ENCODE measurements at regions of chr9 and their contacts with region 1.

Region 1: DNA sequence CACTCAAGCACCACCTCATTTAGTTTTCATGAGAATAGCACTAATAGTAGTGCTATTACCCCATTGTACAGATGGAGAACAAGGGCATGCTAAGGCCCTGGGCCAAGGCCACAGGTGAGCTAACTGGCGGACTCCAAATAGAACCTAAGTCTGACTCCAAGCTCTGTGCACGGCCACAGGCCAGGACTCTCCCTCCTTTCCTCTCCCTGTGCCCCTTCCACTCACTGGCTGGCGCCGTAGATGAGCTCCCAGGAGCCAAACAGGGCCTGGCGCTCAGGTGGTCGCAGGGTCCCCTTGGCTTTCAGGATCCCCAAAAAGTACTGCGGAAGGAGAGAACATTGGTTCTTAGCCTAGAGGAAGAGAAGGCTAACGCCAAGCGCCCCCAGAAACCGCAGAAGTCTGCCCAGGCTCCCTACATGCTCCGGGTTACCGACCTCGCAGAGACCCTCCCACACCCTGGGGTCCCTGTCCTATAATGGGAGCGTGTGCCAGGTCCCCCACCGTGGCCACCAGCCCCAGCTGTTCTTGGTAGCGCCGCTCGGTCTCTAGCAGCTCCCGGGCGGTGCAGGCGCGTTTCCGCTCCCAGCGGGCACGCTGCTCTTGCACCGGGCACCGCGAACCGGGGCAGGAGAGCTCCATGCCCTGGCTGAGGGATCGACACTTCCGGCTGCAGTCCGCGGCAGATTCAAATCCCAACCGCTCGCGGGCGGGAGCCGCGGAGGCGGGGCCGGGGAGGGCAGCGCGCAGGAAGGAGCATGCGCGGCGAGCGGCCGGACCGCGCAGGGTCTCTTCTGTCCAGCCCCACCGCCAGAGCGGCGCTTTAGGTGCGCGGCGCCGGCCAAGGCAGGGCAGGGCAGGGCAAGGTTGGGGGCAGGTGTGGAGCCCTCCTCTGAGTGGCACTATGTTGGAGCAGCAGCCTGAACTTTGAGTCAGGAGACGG is at the start of gene ARHGEF39:
- DNase-seq: peak; percentile 71 to 97 (median 86)
- ATAC-seq: peak; percentile 97
- H3K4me3 ChIP-seq: peak within 1 kb of the TSS; percentile 53
- H3K27ac ChIP-seq: peak within 1 kb of the TSS in 1 of 2 donors; percentile 59
- H3K4me1 ChIP-seq: peaks cover 0 to 49% of the 10 kb centered on the region in 2 donors
- H3K27me3 ChIP-seq: no peaks in the 10 kb centered on the region
- CTCF ChIP-seq: no peak
- polyA plus RNA-seq, gene ARHGEF39: 7.6 to 17.7 (median 11.2) TPM

Region 2: GRCh38 chr9:35481347-35481975 is 183.3 kb before region 1 on chr9:
- intact Hi-C with region 1: no loop called
- DNase-seq: no peak
- ATAC-seq: peak; percentile 78
- H3K4me3 ChIP-seq: no peak overlapping the region
- H3K27ac ChIP-seq: no peak overlapping the region
- H3K4me1 ChIP-seq: peaks cover 0 to 7% of the 10 kb centered on the region in 2 donors
- H3K27me3 ChIP-seq: no peaks in the 10 kb centered on the region
- CTCF ChIP-seq: peak; percentile 55 to 66

Region 3: DNA sequence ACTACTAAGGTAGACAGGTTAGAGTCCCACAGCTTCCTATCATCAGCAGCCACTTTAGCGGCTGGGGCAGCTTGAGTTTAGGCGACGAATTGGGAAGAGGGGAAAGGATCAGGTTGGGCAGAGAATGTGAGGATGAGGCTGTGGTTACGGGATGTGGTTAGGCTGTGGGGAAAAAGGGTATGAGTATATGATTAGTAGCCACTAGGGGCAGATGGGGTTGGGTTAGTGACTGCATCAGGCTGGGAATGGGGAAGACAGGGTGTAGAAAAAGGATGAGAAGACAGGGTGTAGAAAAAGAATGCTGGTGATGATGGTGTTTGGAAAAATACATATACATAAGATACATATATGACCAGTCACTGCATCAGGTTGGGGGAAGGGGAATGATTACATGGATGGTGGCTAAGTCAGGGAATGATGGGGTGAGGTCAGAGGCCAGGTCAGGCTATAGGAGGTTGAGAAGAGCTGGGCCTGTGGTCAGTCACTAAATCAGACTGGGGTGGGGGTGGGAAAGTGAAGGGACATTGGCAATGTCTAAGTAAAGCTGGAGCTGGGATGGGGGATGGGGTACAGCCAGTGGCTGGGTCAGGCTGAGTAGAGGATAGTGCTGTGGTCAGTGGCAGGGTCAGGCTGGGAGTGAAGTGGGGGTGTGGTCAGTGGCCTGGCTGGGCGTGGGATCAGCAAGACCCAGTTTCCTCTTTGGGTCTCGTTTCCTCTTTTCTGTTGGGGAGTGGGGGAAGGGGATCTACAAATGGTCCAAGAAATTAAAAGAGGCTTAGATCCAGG is 65.1 kb after region 1 on chr9:
- intact Hi-C with region 1: loop called in 1 of 2 experiments (anchors 10 kb)
- DNase-seq: peak in 3 of 4 donors; percentile 52 to 93 (median 87)
- ATAC-seq: no peak
- H3K4me3 ChIP-seq: peak overlapping the region; percentile 18 to 83
- H3K27ac ChIP-seq: peak overlapping the region; percentile 96 to 97
- H3K4me1 ChIP-seq: peaks cover 59 to 71% of the 10 kb centered on the region in 2 donors
- H3K27me3 ChIP-seq: no peaks in the 10 kb centered on the region
- CTCF ChIP-seq: peak; percentile 36 to 58

Region 4: GRCh38 chr9:35741740-35742139 is 76.9 kb after region 1 on chr9:
- intact Hi-C with region 1: no loop called
- DNase-seq: no peak
- ATAC-seq: no peak
- H3K4me3 ChIP-seq: no peak overlapping the region
- H3K27ac ChIP-seq: no peak overlapping the region
- H3K4me1 ChIP-seq: peaks cover 16 to 38% of the 10 kb centered on the region in 2 donors
- H3K27me3 ChIP-seq: no peaks in the 10 kb centered on the region
- CTCF ChIP-seq: no peak

Region 5: GRCh38 chr9:36487482-36488388 is 822.9 kb after region 1 on chr9:
- intact Hi-C with region 1: no loop called
- DNase-seq: peak; percentile 88 to 97 (median 95)
- ATAC-seq: peak; percentile 98
- H3K4me3 ChIP-seq: peak overlapping the region; percentile 45 to 81
- H3K27ac ChIP-seq: peak overlapping the region; percentile 89 to 94
- H3K4me1 ChIP-seq: peaks cover 12 to 30% of the 10 kb centered on the region in 2 donors
- H3K27me3 ChIP-seq: no peaks in the 10 kb centered on the region
- CTCF ChIP-seq: no peak

Measured in left lung (tissue), 14 donors.